ENCODE measurements at regions of chr4 and their contacts with region 1.

Region 1: DNA sequence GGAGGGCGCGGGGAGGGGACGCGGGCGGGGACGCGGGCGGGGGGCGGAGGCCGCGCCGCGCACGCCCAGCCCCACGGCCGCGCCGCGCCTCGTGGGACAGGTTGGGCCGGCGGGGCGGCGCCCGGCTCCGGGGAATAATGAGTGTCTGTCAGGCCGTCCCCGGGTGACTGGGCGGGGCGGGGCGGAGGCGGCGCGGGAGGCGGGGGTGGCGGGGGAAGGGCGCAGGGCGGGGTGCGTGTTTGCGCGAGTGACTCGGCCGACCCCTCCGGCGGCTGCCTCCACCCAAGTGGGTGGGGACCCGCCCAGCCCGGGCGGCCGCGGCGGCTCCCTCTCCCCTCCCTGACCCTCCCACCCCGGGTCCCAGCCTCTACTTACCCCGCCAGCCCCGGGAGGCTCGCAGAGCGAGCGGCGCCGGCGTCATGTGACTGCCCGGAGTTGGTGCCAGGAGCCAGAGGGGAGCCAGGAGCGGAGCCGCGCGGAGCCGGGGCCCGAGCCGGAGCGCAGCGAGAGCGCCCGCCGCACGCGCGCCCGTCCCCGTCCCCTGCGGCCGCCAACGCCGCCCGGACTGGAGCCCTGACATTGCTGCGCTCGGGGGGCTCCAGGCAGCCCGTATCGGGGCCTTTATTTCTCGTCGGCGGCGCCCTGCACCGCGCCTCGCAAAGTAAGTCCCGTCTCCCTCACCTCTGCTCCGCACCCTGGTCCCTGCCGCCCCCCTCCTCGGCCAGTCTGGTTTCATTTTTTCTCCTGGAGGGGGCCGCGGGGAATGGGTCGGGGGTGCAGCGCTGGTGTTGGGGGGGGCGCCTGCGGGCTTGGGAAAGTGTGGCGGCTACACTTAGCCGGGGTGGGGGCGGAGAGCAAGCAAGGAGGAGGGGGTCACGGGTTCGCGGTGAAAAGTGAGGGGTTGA is at the start of gene KLF3:
- DNase-seq: peak; percentile 93
- H3K4me3 ChIP-seq: peak within 1 kb of the TSS; percentile 99
- H3K27ac ChIP-seq: peak within 1 kb of the TSS; percentile 99
- H3K4me1 ChIP-seq: peaks cover 6% of the 10 kb centered on the region
- H3K27me3 ChIP-seq: no peaks in the 10 kb centered on the region
- CTCF ChIP-seq: no peak
- POLR2A ChIP-seq: peak; percentile 83
- total RNA-seq, gene KLF3: 47.7 to 55.4 TPM

Region 2: GRCh38 chr4:38620790-38621684 is 43.0 kb before region 1 on chr4:
- intact Hi-C with region 1: loop called (anchors 5 kb)
- DNase-seq: peak; percentile 88
- H3K4me3 ChIP-seq: no peak overlapping the region
- H3K27ac ChIP-seq: peak overlapping the region; percentile 73 to 74
- H3K4me1 ChIP-seq: no peaks in the 10 kb centered on the region
- H3K27me3 ChIP-seq: no peaks in the 10 kb centered on the region
- CTCF ChIP-seq: peak in 1 of 4 experiments; percentile 1
- POLR2A ChIP-seq: peak; percentile 16

Region 3: DNA sequence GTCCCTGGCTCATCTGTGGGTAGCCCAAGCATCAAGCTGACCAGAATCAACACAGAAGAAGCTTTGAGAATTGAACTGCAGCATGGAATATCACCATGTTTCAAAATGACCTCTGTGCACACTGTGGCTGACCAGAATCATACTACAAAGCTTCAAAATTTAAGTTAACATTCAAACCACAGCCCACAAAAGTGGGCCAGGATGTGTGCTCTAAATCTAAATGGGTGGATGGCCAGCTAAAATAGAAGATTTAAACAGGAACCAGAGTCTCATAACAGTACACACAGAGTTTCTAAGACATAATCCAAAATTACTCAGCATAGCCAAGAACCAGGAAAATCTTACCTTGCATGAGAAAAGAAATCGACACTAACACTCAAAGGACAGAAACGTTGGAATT is 46.0 kb after region 1 on chr4:
- intact Hi-C with region 1: no loop called
- DNase-seq: no peak
- H3K4me3 ChIP-seq: no peak overlapping the region
- H3K27ac ChIP-seq: no peak overlapping the region
- H3K4me1 ChIP-seq: no peaks in the 10 kb centered on the region
- H3K27me3 ChIP-seq: no peaks in the 10 kb centered on the region
- CTCF ChIP-seq: no peak
- POLR2A ChIP-seq: no peak

Region 4: GRCh38 chr4:39020130-39020529 is 356.1 kb after region 1 on chr4:
- intact Hi-C with region 1: no loop called
- DNase-seq: no peak
- H3K4me3 ChIP-seq: no peak overlapping the region
- H3K27ac ChIP-seq: no peak overlapping the region
- H3K4me1 ChIP-seq: no peaks in the 10 kb centered on the region
- H3K27me3 ChIP-seq: no peaks in the 10 kb centered on the region
- CTCF ChIP-seq: no peak
- POLR2A ChIP-seq: no peak

Region 5: DNA sequence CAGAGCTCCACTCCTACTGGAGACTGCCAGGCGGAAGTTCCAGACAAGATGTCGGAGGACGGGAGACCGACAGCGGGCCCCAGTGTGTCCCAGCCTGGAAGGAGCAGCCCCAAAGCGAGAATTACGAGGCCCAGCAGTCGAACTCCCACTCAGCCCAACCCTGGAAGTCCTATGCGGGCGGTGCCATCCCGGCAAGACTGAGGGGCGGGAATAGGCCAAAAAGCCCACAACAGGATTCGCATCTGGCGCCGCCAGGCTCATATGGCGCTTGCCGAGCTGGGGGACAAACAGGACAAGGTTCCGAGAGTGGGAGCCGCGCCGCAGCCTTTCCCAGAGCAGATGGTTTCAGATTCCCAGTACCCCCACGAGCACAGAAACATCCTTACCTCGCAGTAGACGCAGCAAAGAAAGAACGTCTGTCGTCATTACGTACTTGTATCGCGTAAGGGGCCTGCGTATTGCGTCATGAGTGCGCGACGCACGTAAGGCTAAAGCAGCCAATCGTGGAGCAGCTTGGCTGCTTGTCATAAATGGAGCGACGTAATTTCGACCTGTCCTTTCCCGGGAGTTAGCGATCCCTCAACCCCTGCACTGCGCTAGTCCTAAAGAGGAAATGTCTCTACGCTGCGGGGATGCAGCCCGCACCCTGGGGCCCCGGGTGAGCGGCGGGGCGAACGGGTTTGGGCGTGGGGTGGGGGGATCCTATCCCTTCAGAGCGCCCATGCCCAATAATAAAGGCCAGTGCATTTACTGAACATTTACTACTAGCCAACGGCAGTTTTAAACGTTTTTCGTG is 794.6 kb after region 1 on chr4 and contains the starts of genes LIAS and RPL9:
- intact Hi-C with region 1: no loop called
- DNase-seq: peak; percentile 95
- H3K4me3 ChIP-seq: peak within 1 kb of the TSS; percentile 68 to 75
- H3K27ac ChIP-seq: peak within 1 kb of the TSS; percentile 92 to 94
- H3K4me1 ChIP-seq: peaks cover 6% of the 10 kb centered on the region
- H3K27me3 ChIP-seq: no peaks in the 10 kb centered on the region
- CTCF ChIP-seq: no peak
- POLR2A ChIP-seq: peak; percentile 89
- total RNA-seq, gene LIAS: 11.2 to 15.3 TPM
- total RNA-seq, gene RPL9: 1,563 to 5,624 TPM

Measured in prostate gland (tissue), 2 donors.